GM10248 (cell line): ENCODE measurements at regions of chr1 and their contacts with region 1.

Region 1: GRCh38 chr1:47437447-47438164 is at the start of gene FOXD2:
- DNase-seq: peak; percentile 96
- CTCF ChIP-seq: peak; percentile 75

Region 2: GRCh38 chr1:47388891-47389238 is 48.7 kb before region 1 on chr1:
- CTCF ChIA-PET with region 1: interaction called, 41 read pairs
- POLR2A ChIA-PET with region 1: no interaction called
- DNase-seq: peak; percentile 73
- CTCF ChIP-seq: peak; percentile 56

Region 3: GRCh38 chr1:47409311-47410070 is 28.1 kb before region 1 on chr1:
- CTCF ChIA-PET with region 1: interaction called, 19 read pairs
- POLR2A ChIA-PET with region 1: no interaction called
- DNase-seq: no peak
- CTCF ChIP-seq: no peak

Region 4: DNA sequence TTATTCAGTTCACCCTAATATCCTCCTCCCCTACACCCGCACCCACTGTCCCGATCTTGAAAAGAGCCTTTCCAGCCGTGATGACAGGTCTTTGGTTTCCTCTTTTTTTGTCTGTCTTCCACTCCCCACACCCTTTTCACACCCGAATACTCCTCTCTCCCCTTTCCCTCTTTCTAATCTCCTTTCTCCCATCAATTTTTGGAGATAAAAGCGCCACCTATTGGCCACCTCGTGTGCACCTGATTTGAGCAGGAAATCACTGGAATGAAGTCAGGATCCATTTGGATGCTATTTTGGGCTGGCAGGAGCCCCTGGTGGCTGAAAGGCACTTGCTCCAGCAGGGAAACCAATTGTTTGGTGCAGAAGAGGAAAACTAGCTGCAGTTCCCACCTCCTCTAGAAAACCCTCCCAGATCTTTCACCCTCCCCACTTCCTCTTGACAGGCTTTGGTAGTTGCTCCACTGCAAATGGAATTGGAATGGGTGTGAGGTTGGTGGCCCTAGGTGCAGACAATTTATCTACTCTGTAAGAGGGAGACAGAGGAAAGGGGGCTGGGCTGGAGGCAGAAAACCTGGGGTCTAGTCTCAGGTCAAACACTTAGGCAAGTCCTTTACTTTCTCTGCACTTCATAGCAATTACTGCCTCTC is 13.1 kb before region 1 on chr1:
- CTCF ChIA-PET with region 1: interaction called, 50 read pairs
- POLR2A ChIA-PET with region 1: no interaction called
- DNase-seq: no peak
- CTCF ChIP-seq: peak; percentile 66

Region 5: GRCh38 chr1:47684964-47685762 is 247.6 kb after region 1 on chr1:
- CTCF ChIA-PET with region 1: interaction called, 10 read pairs
- POLR2A ChIA-PET with region 1: no interaction called
- DNase-seq: no peak
- CTCF ChIP-seq: no peak

Region 6: DNA sequence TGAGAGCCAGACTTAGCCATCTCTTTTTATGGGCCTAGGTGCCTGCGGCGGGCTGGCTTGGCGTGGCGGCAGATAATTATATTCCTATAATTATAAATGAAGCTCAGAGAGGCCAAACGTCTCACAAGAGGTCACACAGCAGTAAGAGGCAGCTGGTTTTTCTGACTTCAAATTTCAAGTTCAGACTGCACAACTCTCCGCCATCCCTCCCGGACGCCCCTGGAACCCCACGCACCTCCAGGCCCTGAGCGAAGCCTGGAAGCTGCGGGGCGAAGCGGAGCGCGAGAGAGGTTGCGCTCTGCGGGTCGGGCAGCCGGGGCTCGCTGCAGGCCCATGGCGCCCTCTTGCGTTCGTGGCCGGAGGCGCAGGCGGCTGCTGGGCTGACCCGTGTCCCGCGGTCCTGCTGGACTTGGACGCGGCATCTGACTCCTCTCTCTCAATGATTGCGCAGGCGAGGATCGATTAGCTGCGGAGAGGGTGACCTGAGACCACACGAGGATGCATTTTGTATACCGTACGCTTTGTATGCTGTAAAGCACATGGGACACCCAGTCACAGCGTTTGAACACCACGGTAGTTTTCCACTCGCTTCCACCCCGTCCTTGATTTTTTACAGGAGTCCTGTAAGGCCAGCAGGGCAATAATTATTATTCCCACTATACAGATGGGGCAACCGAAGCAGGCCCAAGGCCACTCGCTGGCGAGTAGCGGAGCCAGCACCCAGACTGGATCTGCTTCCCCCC is 272.9 kb after region 1 on chr1:
- CTCF ChIA-PET with region 1: interaction called, 226 read pairs
- POLR2A ChIA-PET with region 1: no interaction called
- DNase-seq: peak; percentile 91
- CTCF ChIP-seq: peak; percentile 95